Lower leg skin (tissue), 4 donors: ENCODE measurements at regions of chrX and their contacts with region 1.

Region 1: GRCh38 chrX:70432936-70433847 is 10.1 kb downstream of the GDPD2 start:
- DNase-seq: peak in 1 of 2 donors; percentile 54
- H3K4me3 ChIP-seq: no peak overlapping the region
- CTCF ChIP-seq: no peak
- POLR2A ChIP-seq: no peak

Region 2: GRCh38 chrX:69466546-69466945 is 966.6 kb before region 1 on chrX:
- intact Hi-C with region 1: no loop called
- DNase-seq: no peak
- H3K4me3 ChIP-seq: no peak overlapping the region
- CTCF ChIP-seq: no peak
- POLR2A ChIP-seq: no peak

Region 3: DNA sequence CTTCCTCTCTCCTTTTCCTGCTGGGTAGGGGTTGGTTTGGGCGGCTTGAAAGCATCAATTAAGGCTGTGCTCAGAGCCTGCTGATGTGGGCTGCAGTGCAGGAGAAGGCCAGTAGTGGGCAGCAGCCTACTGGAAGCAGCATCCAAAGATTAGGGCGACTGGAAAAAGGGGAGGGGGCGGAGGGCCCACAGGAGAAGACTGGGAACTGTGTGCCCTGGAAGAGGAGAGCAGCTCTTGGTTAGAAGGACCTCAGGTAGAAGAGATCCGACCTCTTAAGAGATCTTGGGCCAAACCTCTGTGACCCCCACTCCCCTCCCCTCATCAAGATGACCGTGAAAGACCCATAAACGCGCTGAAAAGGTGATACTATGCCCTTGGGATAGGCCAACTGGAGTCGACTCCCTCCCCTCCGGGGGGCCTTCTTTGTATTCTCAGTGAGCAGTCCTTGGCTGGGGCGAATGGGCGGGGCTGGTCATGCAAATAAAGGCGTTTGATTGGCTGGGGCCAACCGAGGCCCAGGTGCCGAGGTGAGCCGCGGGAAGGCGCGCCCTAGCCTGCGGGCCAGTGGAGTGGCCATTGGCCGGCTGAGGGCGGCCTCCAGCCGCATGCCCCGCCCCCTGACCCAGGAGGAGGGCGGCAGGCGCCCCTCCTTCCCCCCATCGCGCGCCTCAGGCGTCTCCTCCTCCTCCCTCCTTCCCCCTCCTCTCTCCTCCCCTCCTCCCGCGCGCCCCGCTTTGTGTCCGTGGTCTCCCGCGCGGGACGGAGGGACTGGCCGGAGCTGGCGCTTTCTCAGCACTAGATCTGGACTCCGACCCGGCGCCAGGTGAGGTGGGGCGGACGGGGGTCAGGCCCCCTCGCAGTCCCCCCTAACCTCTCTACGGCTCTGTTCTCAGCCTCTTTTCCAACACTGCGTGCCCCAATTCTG is 21.5 kb after region 1 on chrX:
- intact Hi-C with region 1: loop called (anchors 1 kb)
- DNase-seq: no peak
- H3K4me3 ChIP-seq: no peak overlapping the region
- CTCF ChIP-seq: peak in 1 of 3 donors; percentile 50
- POLR2A ChIP-seq: no peak